OCI-LY7 (cell line): ENCODE measurements at regions of chr2 and their contacts with region 1.

Region 1: GRCh38 chr2:88499204-88499603 is 46.7 kb upstream of the FOXI3 start:
- DNase-seq: no peak
- H3K4me3 ChIP-seq: no peak overlapping the region
- H3K27ac ChIP-seq: no peak overlapping the region
- H3K4me1 ChIP-seq: no peaks in the 10 kb centered on the region
- CTCF ChIP-seq: no peak

Region 2: DNA sequence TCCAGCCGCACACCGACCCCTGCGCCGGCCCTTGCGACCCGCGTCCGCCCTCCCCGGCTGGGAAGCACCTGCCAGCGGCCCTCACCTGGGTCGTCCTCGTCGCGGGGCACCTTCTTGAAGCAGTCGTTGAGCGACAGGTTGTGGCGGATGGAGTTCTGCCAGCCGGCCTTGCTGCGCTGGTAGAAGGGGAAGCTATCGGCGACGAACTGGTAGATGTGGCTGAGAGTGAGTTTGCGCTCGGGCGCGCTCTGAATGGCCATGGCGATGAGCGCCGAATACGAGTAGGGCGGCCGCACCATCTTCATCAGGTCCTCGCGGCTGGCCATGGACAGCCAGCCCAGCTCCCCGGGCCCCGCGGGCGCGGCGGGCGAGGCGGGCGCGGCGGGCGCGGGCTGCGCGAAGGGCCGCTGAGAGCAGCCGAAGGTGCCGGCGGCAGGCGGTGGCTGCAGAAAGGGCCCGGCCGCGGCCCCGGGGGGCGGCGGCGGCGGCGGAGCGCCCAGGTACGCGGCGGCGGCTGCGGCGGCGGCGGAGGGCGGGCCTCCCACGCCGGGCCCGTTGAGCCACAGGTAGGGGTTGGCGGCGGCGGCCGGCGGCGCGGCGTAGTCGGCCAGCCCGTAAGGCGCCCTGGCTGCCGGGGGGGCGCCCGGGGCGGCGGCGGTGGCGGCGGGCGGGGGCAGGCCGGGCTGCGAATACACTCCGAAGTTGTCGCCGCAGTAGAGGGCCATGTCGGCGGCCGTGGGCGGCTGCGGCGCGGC is 47.2 kb before region 1 on chr2:
- CTCF ChIA-PET with region 1: no interaction called
- POLR2A ChIA-PET with region 1: no interaction called
- intact Hi-C with region 1: no loop called
- DNase-seq: no peak
- H3K4me3 ChIP-seq: no peak overlapping the region
- H3K27ac ChIP-seq: no peak overlapping the region
- H3K4me1 ChIP-seq: no peaks in the 10 kb centered on the region
- CTCF ChIP-seq: no peak

Region 3: DNA sequence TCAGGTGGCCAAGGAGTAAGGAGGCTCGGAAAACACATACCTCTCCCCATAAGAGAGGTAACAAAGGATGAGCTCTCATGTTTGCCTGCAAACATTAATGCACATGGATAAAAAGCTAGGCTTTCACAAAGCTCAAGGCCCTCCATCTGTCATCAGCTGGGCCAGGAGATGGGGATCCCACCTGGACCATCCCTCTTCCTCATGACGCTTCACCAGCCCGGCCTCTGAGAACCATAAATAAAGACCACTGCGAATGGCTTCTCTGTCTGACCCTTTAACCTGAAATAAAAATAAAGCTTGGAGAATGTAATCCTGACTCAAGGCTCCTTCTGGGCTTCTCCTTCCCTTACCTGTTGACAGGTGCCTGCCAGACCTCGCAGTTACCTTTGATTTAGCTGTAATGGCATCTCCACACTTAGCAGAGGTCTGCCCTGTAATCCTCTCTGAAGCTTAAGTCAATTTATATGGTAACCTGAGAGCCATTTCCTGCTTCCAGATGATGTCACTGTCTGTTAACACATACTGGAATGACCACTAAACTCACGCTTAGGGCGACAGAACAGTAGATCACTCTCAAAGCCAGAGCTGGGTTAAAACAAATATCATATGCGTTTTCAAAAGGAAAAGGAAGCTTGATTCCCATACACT is 17.4 kb before region 1 on chr2:
- CTCF ChIA-PET with region 1: interaction called, 3 read pairs
- POLR2A ChIA-PET with region 1: no interaction called
- intact Hi-C with region 1: loop called (anchors 2 kb)
- DNase-seq: peak; percentile 7
- H3K4me3 ChIP-seq: no peak overlapping the region
- H3K27ac ChIP-seq: no peak overlapping the region
- H3K4me1 ChIP-seq: no peaks in the 10 kb centered on the region
- CTCF ChIP-seq: no peak